ENCODE measurements at regions of chr1 and their contacts with region 1.

Region 1: GRCh38 chr1:156445789-156446263 is 54.7 kb downstream of the MEF2D start:
- DNase-seq: peak; percentile 39
- H3K4me3 ChIP-seq: no peak overlapping the region
- H3K27ac ChIP-seq: no peak overlapping the region
- H3K27me3 ChIP-seq: peaks cover 64% of the 10 kb centered on the region
- CTCF ChIP-seq: peak; percentile 99

Region 2: DNA sequence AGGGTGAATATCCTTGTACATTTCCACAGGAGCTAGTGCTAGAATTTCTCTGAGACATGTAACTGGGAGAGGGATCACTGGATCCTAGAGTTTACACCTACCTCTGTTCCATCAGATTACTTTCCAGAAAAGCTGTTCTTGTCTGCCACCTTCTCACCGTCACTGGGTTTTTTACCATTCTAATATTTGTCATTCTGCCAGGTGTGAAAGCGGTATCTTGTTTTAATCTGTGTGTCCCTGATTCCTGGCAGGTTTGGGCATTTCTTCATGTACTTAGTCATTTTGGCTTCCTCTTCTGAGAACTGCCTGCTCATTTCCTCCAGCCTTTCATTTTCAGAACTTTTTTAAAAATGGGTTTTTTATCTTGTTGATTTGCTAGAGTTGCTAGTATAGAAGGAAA is 228.0 kb before region 1 on chr1:
- CTCF ChIA-PET with region 1: no interaction called
- POLR2A ChIA-PET with region 1: no interaction called
- DNase-seq: no peak
- H3K4me3 ChIP-seq: no peak overlapping the region
- H3K27ac ChIP-seq: peak overlapping the region; percentile 47
- H3K27me3 ChIP-seq: no peaks in the 10 kb centered on the region
- CTCF ChIP-seq: no peak

Region 3: DNA sequence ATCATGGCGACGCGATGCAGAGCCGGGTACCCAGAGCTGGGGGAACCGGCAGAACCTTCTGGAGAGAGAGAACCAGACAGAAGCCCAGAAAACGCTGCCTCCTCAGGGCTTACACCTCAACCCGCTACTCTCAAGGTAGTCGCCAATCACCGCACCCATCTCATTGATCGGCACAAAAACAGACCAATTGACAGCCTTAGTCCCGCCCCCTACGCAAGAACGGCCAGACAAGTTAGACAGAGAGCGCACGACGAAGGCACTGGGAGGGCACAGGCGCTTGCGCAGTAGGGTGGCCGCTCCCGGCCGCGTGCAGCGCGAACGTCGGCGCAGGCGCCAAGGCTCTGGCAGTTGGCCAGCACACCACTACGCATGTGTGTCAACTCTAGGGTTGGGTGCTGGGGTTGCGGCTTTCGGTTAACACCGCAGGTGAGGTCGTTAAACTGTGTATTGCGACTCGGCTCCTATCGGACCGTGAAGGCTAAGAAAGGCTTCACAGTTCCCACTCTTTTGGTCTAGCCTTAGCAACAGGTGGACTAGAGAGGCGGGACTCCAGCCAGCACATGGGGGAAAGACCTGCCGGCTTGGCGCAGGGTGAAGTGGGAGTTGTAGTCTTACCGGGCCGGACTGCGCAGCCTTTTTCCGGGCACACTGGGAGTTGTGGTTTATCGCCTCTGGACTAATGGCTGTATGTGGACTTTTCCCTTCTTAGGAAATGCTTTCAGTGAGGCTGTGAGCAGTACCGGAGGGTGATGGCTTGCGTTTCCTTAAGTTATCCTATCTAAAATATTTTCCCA is 107.4 kb before region 1 on chr1 and contains the starts of genes CCT3 and TSACC:
- CTCF ChIA-PET with region 1: interaction called, 11 read pairs
- POLR2A ChIA-PET with region 1: no interaction called
- DNase-seq: peak; percentile 100
- H3K4me3 ChIP-seq: peak within 1 kb of the TSS; percentile 98
- H3K27ac ChIP-seq: peak within 1 kb of the TSS; percentile 39
- H3K27me3 ChIP-seq: no peaks in the 10 kb centered on the region
- CTCF ChIP-seq: no peak
- polyA plus RNA-seq, gene CCT3: 314 and 359 TPM in 2 replicates
- polyA plus RNA-seq, gene TSACC: 0.27 and 0.48 TPM in 2 replicates

Region 4: GRCh38 chr1:156371553-156372264 is 74.1 kb before region 1 on chr1:
- CTCF ChIA-PET with region 1: interaction called, 41 read pairs
- POLR2A ChIA-PET with region 1: no interaction called
- DNase-seq: no peak
- H3K4me3 ChIP-seq: no peak overlapping the region
- H3K27ac ChIP-seq: no peak overlapping the region
- H3K27me3 ChIP-seq: peaks cover 32% of the 10 kb centered on the region
- CTCF ChIP-seq: no peak

Region 5: DNA sequence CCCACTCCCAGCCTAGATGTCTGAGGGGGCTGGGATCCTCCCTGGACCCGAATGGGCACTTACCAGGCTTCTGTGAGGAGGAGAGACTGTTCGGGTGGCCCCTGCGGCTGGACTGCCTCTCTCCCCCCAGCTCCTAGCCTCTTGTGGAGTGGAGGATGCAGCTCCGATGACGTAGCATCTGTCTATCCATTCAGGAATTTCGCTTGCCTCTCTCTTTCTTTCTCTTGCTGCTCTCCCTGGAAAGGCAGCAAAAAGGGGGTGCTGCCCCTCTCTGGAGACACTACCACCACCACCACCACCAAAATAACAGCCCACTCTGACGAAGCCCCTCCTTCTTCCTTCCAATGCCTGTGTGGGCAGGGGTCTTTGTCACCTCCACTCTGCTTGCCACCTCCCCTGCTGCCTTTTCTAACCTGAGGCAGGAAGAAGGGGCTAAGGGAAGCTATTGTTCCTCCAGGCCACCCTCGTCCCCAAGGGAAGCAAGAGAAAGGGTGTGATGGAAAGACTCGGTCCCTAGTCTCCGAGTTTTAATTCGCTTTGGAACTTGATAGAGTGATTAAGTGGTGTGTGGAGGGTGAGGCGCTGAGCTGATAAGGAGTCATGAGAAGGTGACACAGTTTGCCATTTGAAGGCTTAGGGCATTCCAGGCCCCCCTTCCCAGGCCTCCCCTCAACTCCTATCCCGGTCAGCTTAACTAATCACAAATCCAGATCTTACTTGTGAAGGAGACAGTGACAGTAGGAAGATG is 16.3 kb before region 1 on chr1:
- CTCF ChIA-PET with region 1: interaction called, 27 read pairs
- POLR2A ChIA-PET with region 1: no interaction called
- DNase-seq: no peak
- H3K4me3 ChIP-seq: no peak overlapping the region
- H3K27ac ChIP-seq: no peak overlapping the region
- H3K27me3 ChIP-seq: peaks cover 96% of the 10 kb centered on the region
- CTCF ChIP-seq: no peak

Region 6: DNA sequence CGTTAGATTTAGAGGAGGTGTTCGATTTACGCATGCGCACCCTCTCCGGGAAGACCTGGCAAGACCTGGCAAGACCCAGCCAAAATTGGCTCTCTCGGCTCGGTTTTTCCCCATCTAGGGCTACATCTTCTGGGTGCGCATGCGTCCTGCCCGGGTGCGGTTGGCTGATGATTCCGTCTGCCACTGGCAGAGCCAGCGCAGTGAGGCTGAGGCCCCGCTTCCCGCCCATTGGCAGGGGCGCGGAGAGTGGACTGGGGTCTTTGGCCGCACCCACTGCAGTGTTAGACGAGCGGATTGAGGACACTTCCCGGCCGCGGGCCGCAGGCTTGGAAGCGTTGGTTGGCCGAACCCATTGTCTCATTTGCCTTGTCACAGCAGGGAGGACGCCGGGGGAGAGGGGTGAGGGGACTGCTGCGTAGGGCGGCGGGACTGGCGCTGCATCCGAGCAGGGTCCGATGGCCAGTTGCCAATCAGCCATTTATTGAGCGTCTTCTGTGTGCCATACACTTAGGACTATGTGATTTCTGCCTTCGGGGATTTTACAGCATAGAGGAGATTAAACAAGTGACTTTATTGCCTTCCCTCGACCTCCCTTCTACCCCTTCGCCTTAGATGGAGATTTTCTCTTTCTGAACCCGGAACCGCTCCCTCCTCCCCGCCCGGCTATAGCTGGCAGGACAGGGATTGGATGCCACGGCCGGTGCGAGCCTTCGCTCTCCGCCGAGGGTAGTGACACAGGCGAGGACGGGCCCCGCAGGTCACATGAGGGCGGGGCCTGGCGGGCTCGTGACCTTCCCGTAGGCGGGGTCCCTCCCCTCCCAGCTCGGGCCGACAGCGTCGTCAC is 11.0 kb after region 1 on chr1:
- CTCF ChIA-PET with region 1: interaction called, 19 read pairs
- POLR2A ChIA-PET with region 1: no interaction called
- DNase-seq: peak; percentile 95
- H3K4me3 ChIP-seq: peak overlapping the region; percentile 60
- H3K27ac ChIP-seq: peak overlapping the region; percentile 92
- H3K27me3 ChIP-seq: peaks cover 4% of the 10 kb centered on the region
- CTCF ChIP-seq: no peak

Region 7: GRCh38 chr1:156608036-156608674 is 162.3 kb after region 1 on chr1:
- CTCF ChIA-PET with region 1: interaction called, 14 read pairs
- POLR2A ChIA-PET with region 1: interaction called, 3 read pairs
- DNase-seq: peak; percentile 39
- H3K4me3 ChIP-seq: no peak overlapping the region
- H3K27ac ChIP-seq: no peak overlapping the region
- H3K27me3 ChIP-seq: peaks cover 18% of the 10 kb centered on the region
- CTCF ChIP-seq: peak; percentile 91

Measured in AG04450 (cell line).